GM12878 (cell line): ENCODE measurements at regions of chr6 and their contacts with region 1.

Region 1: DNA sequence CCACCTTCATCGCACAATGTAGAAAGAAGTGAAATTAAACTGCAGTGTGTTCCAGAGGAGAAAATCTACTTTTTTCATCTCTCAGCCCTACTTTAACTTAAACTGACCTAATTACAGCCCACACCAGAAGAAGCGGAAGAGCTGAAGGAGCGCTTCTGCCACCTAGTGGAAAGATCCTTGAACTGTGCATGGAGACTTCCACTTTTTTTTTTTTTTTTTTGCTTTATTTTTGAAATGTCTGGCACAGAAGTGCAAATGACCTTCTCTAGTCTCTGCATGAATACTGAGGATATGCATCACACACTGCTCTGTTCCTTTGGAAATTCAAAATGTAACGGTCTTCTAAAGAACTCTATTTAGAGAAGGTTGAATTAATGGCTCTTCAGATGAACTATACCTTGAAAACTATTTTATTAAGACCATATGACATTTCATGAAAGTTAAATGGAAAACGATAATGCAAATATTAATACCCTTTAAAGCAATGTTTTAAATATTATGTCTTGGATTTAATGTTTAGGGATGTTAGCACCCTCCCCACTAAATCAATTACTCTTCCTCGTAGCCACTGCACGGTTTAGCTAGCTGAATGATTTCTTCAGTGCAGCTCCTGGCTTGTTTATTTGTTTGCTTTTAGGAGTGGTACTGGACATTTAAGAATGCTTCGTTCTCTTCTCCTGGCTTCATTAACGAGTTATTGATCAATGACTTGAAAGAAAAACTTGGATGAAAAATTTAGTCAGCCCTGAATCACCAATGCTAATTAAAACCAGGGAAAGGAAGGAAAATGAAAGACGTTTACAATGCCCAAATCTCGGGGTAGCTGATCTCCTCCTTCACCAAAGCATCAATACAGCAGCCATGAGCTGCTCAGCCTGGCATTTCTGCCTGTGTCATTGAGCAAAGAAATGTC is 569.6 kb upstream of the GJE1 start:
- DNase-seq: peak; percentile 53
- ATAC-seq: peak; percentile 96
- H3K4me3 ChIP-seq: peak overlapping the region; percentile 30; the same call in 1 of the 2 replicates
- H3K27ac ChIP-seq: no peak overlapping the region
- H3K4me1 ChIP-seq: peaks cover 4% of the 10 kb centered on the region; the same call in 1 of the 2 replicates
- H3K27me3 ChIP-seq: no peaks in the 10 kb centered on the region
- CTCF ChIP-seq: peak; percentile 75 to 84 (median 83)
- EP300 ChIP-seq: no peak; a peak in 1 of 4 replicates
- POLR2A ChIP-seq: no peak
- RAD21 ChIP-seq: peak; percentile 98

Region 2: DNA sequence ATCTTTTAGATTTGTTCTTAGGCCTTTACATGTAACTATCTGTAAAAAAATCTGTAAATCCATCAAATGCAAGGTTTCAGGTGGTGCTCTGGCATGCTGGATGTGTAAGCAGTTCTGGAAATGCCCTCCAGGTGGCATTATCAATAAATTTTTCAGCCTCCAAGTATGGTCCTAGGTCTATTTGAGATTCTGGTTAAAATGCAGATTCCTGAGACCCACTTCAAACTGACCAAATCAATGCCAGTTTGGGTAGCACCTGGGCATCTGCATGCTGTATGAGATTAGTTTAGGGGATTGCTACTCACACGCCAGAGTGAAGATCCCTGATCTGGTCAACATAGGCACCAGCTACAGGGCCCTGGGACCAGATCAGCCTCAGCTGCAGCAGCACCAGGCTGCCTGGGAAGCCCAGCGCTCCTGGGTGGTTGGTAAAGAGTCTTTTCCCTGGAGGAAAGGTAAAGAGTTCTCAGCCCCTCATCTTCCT is 1681.3 kb before region 1 on chr6:
- CTCF ChIA-PET with region 1: interaction called, 3 read pairs
- POLR2A ChIA-PET with region 1: no interaction called
- RAD21 ChIA-PET with region 1: interaction called, 3 read pairs
- SMC1A ChIA-PET with region 1: no interaction called
- in situ Hi-C with region 1: no loop called
- intact Hi-C with region 1: loop called (anchors 10 kb)
- DNase-seq: no peak
- ATAC-seq: peak; percentile 92
- H3K4me3 ChIP-seq: no peak overlapping the region
- H3K27ac ChIP-seq: no peak overlapping the region
- H3K4me1 ChIP-seq: peaks cover 12% of the 10 kb centered on the region
- H3K27me3 ChIP-seq: no peaks in the 10 kb centered on the region
- CTCF ChIP-seq: peak; percentile 46 to 56 (median 55)
- EP300 ChIP-seq: no peak
- POLR2A ChIP-seq: no peak
- RAD21 ChIP-seq: peak; percentile 52

Region 3: DNA sequence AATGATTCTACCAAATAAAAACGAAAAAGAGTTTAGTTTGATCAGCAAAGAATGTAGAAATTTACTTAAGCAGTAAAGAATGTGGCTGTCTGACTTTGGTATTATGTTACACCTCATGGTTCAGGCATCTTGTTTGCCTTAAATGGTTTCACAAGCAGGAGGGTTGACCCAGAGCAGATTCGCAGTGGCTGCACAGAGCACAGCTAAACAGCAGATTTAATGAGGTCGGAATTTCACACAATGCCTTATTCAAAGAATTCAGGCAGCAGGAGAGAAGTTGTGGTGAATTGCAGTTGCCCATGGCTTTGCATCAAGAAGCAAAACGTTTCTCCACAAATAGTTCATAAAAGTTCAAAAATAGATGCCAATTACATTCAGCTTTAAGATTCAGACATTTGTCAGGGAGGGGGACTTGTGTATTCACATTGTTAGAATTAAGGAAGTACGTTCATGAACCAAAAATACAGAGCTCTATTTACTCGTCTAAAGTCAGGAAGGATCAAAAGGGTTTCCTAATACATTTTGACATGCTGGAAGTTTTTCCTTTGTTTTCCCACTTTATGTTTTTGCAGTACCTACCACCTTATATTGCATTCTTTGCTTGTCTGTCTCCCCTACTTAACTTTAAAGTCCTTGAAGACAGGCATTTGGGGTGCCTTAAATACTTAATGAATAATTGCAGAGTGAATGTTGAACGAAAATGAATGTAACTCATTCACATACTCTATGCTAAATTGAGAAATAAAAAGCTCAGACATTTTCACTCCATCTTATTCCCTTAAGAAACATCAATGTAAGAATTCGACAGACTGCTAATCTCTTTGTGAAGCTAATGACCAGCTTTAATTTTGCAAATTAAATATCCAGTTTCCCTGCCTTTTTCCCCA is 1025.0 kb before region 1 on chr6:
- CTCF ChIA-PET with region 1: no interaction called
- POLR2A ChIA-PET with region 1: no interaction called
- RAD21 ChIA-PET with region 1: no interaction called
- SMC1A ChIA-PET with region 1: interaction called, 3 read pairs
- in situ Hi-C with region 1: no loop called
- intact Hi-C with region 1: loop called (anchors 10 kb)
- DNase-seq: no peak
- ATAC-seq: peak; percentile 63
- H3K4me3 ChIP-seq: no peak overlapping the region
- H3K27ac ChIP-seq: no peak overlapping the region
- H3K4me1 ChIP-seq: no peaks in the 10 kb centered on the region
- H3K27me3 ChIP-seq: no peaks in the 10 kb centered on the region
- CTCF ChIP-seq: no peak
- EP300 ChIP-seq: no peak; a peak in 1 of 4 replicates
- POLR2A ChIP-seq: no peak
- RAD21 ChIP-seq: no peak

Region 4: GRCh38 chr6:140921366-140922226 is 641.5 kb before region 1 on chr6:
- CTCF ChIA-PET with region 1: no interaction called
- POLR2A ChIA-PET with region 1: no interaction called
- RAD21 ChIA-PET with region 1: interaction called, 3 read pairs
- SMC1A ChIA-PET with region 1: interaction called, 3 read pairs
- in situ Hi-C with region 1: no loop called
- intact Hi-C with region 1: loop called (anchors 5 kb)
- DNase-seq: no peak
- ATAC-seq: peak; percentile 87
- H3K4me3 ChIP-seq: no peak overlapping the region
- H3K27ac ChIP-seq: no peak overlapping the region
- H3K4me1 ChIP-seq: no peaks in the 10 kb centered on the region
- H3K27me3 ChIP-seq: no peaks in the 10 kb centered on the region
- CTCF ChIP-seq: peak; percentile 57 to 77 (median 60); a peak in 5 of 6 replicates
- EP300 ChIP-seq: no peak
- POLR2A ChIP-seq: no peak
- RAD21 ChIP-seq: peak; percentile 92

Region 5: GRCh38 chr6:141309295-141309694 is 253.8 kb before region 1 on chr6:
- CTCF ChIA-PET with region 1: interaction called, 8 read pairs
- POLR2A ChIA-PET with region 1: no interaction called
- RAD21 ChIA-PET with region 1: interaction called, 3 read pairs
- SMC1A ChIA-PET with region 1: interaction called, 3 read pairs
- in situ Hi-C with region 1: no loop called
- intact Hi-C with region 1: loop called (anchors 2 kb)
- DNase-seq: no peak
- ATAC-seq: peak; percentile 48; the same call in 1 of the 3 replicates
- H3K4me3 ChIP-seq: no peak overlapping the region
- H3K27ac ChIP-seq: no peak overlapping the region
- H3K4me1 ChIP-seq: no peaks in the 10 kb centered on the region
- H3K27me3 ChIP-seq: no peaks in the 10 kb centered on the region
- CTCF ChIP-seq: peak in 1 of 3 experiments; percentile 20; a peak in 1 of 6 replicates
- EP300 ChIP-seq: no peak
- POLR2A ChIP-seq: no peak
- RAD21 ChIP-seq: peak; percentile 46

Region 6: GRCh38 chr6:141552473-141552878 is 10.6 kb before region 1 on chr6:
- CTCF ChIA-PET with region 1: no interaction called
- POLR2A ChIA-PET with region 1: no interaction called
- RAD21 ChIA-PET with region 1: interaction called, 3 read pairs
- SMC1A ChIA-PET with region 1: interaction called, 10 read pairs
- in situ Hi-C with region 1: no loop called
- intact Hi-C with region 1: no loop called
- DNase-seq: peak; percentile 34
- ATAC-seq: peak; percentile 88
- H3K4me3 ChIP-seq: no peak overlapping the region
- H3K27ac ChIP-seq: no peak overlapping the region
- H3K4me1 ChIP-seq: no peaks in the 10 kb centered on the region
- H3K27me3 ChIP-seq: no peaks in the 10 kb centered on the region
- CTCF ChIP-seq: no peak
- EP300 ChIP-seq: peak in 1 of 2 experiments; percentile 67; a peak in 2 of 4 replicates
- POLR2A ChIP-seq: no peak
- RAD21 ChIP-seq: no peak